ENCODE measurements at regions of chr3 and their contacts with region 1.

Region 1: DNA sequence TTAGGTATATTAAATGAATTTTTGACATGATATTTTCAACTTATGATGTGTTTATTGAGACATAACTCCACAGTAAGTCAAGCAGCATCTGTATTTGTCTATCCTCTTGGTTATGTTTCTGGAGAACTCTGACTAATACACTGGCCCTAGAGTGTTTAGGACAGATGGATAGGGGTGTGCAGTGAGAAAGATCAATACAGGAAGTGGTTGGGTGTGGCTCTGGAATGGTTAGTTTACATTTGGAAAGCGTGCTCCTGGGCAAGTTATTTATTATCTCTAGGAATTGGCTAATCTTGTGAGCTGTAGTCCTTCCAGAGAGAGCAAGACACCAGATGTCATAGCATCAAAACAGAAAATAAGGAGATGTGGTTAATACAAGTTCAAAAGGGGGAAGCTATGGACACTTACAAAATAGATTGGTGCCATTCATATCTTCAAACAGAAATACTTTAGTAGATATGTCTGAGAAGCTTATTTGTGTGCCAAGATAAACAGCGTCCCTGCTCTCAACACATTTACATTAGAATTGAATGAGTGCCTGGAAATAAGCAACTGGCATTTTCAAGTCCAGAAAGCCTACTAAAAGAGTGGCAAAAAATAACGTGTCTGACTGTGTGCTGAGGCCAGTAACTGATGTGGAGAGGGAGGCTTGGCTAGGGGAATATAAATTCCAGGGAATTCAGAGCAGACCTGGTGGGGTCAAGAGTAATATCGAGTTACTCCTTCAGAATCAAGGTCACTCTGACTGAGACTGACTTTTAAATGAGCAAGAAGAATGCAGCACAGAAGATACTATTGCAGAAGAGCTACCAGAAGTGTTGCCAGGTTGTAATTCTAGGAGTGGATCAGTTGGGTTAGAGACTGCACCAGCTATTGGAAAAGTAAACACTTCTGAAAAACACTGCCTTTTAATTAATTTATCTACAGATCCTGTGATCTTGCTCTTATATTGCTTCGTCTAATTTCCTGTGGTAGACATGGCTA is 33.4 kb upstream of the PLAAT1 start:
- DNase-seq: no peak
- ATAC-seq: no peak
- H3K4me3 ChIP-seq: no peak overlapping the region
- H3K27ac ChIP-seq: no peak overlapping the region
- H3K4me1 ChIP-seq: no peaks in the 10 kb centered on the region
- H3K27me3 ChIP-seq: no peaks in the 10 kb centered on the region
- CTCF ChIP-seq: no peak
- POLR2A ChIP-seq: no peak
- RAD21 ChIP-seq: no peak

Region 2: GRCh38 chr3:192395506-192395905 is 812.1 kb before region 1 on chr3:
- CTCF ChIA-PET with region 1: no interaction called
- POLR2A ChIA-PET with region 1: no interaction called
- dilution Hi-C with region 1: no loop called
- in situ Hi-C with region 1: no loop called
- intact Hi-C with region 1: loop called (anchors 5 kb)
- DNase-seq: no peak
- ATAC-seq: no peak
- H3K4me3 ChIP-seq: no peak overlapping the region
- H3K27ac ChIP-seq: no peak overlapping the region
- H3K4me1 ChIP-seq: no peaks in the 10 kb centered on the region
- H3K27me3 ChIP-seq: no peaks in the 10 kb centered on the region
- CTCF ChIP-seq: no peak
- POLR2A ChIP-seq: no peak
- RAD21 ChIP-seq: no peak

Region 3: GRCh38 chr3:192812743-192813383 is 394.7 kb before region 1 on chr3:
- CTCF ChIA-PET with region 1: no interaction called
- POLR2A ChIA-PET with region 1: no interaction called
- dilution Hi-C with region 1: no loop called
- in situ Hi-C with region 1: no loop called
- intact Hi-C with region 1: no loop called
- DNase-seq: peak; percentile 70
- ATAC-seq: peak; percentile 85
- H3K4me3 ChIP-seq: no peak overlapping the region
- H3K27ac ChIP-seq: no peak overlapping the region
- H3K4me1 ChIP-seq: peaks cover 8% of the 10 kb centered on the region
- H3K27me3 ChIP-seq: no peaks in the 10 kb centered on the region
- CTCF ChIP-seq: peak; percentile 78
- POLR2A ChIP-seq: no peak
- RAD21 ChIP-seq: peak; percentile 77

Measured in IMR-90 (cell line).